Tibial artery (tissue), 4 donors: ENCODE measurements at regions of chr16 and their contacts with region 1.

Region 1: GRCh38 chr16:69386596-69386995 is 789 bp upstream of the TERF2 start:
- DNase-seq: no peak
- H3K4me3 ChIP-seq: peak overlapping the region in 1 of 2 donors; percentile 62
- H3K27ac ChIP-seq: no peak overlapping the region
- H3K4me1 ChIP-seq: peaks cover 0 to 21% (median 13%) of the 10 kb centered on the region in 4 donors
- H3K27me3 ChIP-seq: no peaks in the 10 kb centered on the region
- CTCF ChIP-seq: no peak

Region 2: GRCh38 chr16:69330286-69331109 is 56.1 kb before region 1 on chr16 and contains the start of gene PDF:
- intact Hi-C with region 1: loop called (anchors 5 kb)
- DNase-seq: peak; percentile 96
- H3K4me3 ChIP-seq: peak within 1 kb of the TSS; percentile 92 to 96
- H3K27ac ChIP-seq: peak within 1 kb of the TSS; percentile 85 to 90
- H3K4me1 ChIP-seq: peaks cover 0 to 52% (median 27%) of the 10 kb centered on the region in 4 donors
- H3K27me3 ChIP-seq: no peaks in the 10 kb centered on the region
- CTCF ChIP-seq: peak in 1 of 2 experiments; percentile 7

Region 3: DNA sequence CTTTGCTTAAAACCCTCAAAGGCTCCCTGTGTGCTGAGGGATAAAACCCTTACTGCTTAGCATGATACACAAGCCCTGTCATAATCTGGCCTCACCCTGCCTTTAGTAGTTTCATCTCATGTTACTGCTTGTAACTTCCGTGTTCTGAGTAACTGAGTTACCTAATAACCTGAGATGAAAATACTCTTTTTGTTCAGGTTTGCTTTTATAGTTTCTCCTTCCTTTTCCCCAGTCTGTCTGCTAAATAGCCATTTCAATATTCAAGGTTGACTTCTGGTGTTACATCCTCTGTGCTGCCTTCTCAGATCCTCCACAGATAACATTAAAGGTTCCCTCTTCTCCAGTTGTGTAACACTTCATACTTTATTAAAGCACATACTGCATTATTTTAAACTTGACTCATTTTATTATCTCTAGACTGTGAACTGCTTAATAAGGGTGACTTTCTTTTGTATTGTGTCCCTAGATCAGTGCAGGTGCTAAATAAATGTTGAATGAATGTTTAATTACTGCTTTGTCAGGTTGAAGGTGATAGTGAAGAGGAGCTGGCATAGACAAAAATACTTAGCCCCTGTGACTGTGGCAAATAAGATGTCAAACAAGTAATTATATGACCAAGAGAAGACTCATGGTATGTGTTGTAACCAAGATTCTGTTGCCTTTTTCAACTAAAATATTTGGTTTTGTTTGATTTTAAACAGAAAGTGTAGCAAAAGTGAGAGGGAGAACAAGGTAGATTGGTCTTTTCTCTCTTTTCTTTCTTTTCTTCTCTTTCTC is 227.0 kb after region 1 on chr16:
- intact Hi-C with region 1: no loop called
- DNase-seq: no peak
- H3K4me3 ChIP-seq: no peak overlapping the region
- H3K27ac ChIP-seq: peak overlapping the region in 1 of 2 donors; percentile 3
- H3K4me1 ChIP-seq: peaks cover 0 to 72% (median 34%) of the 10 kb centered on the region in 4 donors
- H3K27me3 ChIP-seq: no peaks in the 10 kb centered on the region
- CTCF ChIP-seq: no peak